ENCODE measurements at regions of chr20 and their contacts with region 1.

Region 1: GRCh38 chr20:56554869-56555268 is 21.8 kb downstream of the FAM209B start:
- DNase-seq: peak; percentile 61
- ATAC-seq: peak; percentile 78
- H3K4me3 ChIP-seq: no peak overlapping the region
- H3K27ac ChIP-seq: no peak overlapping the region
- H3K4me1 ChIP-seq: no peaks in the 10 kb centered on the region
- H3K27me3 ChIP-seq: no peaks in the 10 kb centered on the region
- CTCF ChIP-seq: no peak

Region 2: GRCh38 chr20:56624786-56625681 is 70.2 kb after region 1 on chr20:
- CTCF ChIA-PET with region 1: no interaction called
- POLR2A ChIA-PET with region 1: no interaction called
- in situ Hi-C with region 1: no loop called
- intact Hi-C with region 1: no loop called
- DNase-seq: no peak
- ATAC-seq: no peak
- H3K4me3 ChIP-seq: no peak overlapping the region
- H3K27ac ChIP-seq: no peak overlapping the region
- H3K4me1 ChIP-seq: 0 out of 2 replicates have a peak, but pooled peaks cover 4% of the 10 kb centered on the region
- H3K27me3 ChIP-seq: no peaks in the 10 kb centered on the region
- CTCF ChIP-seq: no peak

Region 3: GRCh38 chr20:56974499-56975236 is 419.8 kb after region 1 on chr20:
- CTCF ChIA-PET with region 1: no interaction called
- POLR2A ChIA-PET with region 1: no interaction called
- in situ Hi-C with region 1: no loop called
- intact Hi-C with region 1: loop called (anchors 5 kb)
- DNase-seq: no peak
- ATAC-seq: peak; percentile 78
- H3K4me3 ChIP-seq: no peak overlapping the region
- H3K27ac ChIP-seq: no peak overlapping the region
- H3K4me1 ChIP-seq: 0 out of 2 replicates have a peak, but pooled peaks cover 5% of the 10 kb centered on the region
- H3K27me3 ChIP-seq: peaks cover 3% of the 10 kb centered on the region; the same call in 1 of the 2 replicates
- CTCF ChIP-seq: peak; percentile 86

Region 4: GRCh38 chr20:56995576-56996075 is 440.8 kb after region 1 on chr20:
- CTCF ChIA-PET with region 1: interaction called, 3 read pairs
- POLR2A ChIA-PET with region 1: no interaction called
- in situ Hi-C with region 1: no loop called
- intact Hi-C with region 1: loop called (anchors 2 kb)
- DNase-seq: no peak
- ATAC-seq: peak; percentile 84
- H3K4me3 ChIP-seq: no peak overlapping the region
- H3K27ac ChIP-seq: no peak overlapping the region
- H3K4me1 ChIP-seq: peaks cover 7% of the 10 kb centered on the region
- H3K27me3 ChIP-seq: no peaks in the 10 kb centered on the region
- CTCF ChIP-seq: peak; percentile 90

Region 5: GRCh38 chr20:57047281-57048026 is 492.6 kb after region 1 on chr20:
- CTCF ChIA-PET with region 1: no interaction called
- POLR2A ChIA-PET with region 1: no interaction called
- in situ Hi-C with region 1: no loop called
- intact Hi-C with region 1: loop called (anchors 2 kb)
- DNase-seq: no peak
- ATAC-seq: peak; percentile 65
- H3K4me3 ChIP-seq: no peak overlapping the region
- H3K27ac ChIP-seq: no peak overlapping the region
- H3K4me1 ChIP-seq: peaks cover 6% of the 10 kb centered on the region
- H3K27me3 ChIP-seq: no peaks in the 10 kb centered on the region
- CTCF ChIP-seq: peak; percentile 53

Measured in Panc1 (cell line).